ENCODE measurements at regions of chr2 and their contacts with region 1.

Region 1: GRCh38 chr2:159300585-159300984 is 14.1 kb upstream of the WDSUB1 start:
- DNase-seq: no peak
- ATAC-seq: no peak
- H3K4me3 ChIP-seq: no peak overlapping the region
- H3K4me3 Mint-ChIP-seq: no peak overlapping the region
- H3K27ac ChIP-seq: no peak overlapping the region
- H3K27ac Mint-ChIP-seq: no peak overlapping the region
- H3K4me1 ChIP-seq: no peaks in the 10 kb centered on the region
- H3K4me1 Mint-ChIP-seq: no peaks in the 10 kb centered on the region
- H3K27me3 ChIP-seq: no peaks in the 10 kb centered on the region
- H3K27me3 Mint-ChIP-seq: peaks cover 7% of the 10 kb centered on the region
- CTCF ChIP-seq: no peak

Region 2: DNA sequence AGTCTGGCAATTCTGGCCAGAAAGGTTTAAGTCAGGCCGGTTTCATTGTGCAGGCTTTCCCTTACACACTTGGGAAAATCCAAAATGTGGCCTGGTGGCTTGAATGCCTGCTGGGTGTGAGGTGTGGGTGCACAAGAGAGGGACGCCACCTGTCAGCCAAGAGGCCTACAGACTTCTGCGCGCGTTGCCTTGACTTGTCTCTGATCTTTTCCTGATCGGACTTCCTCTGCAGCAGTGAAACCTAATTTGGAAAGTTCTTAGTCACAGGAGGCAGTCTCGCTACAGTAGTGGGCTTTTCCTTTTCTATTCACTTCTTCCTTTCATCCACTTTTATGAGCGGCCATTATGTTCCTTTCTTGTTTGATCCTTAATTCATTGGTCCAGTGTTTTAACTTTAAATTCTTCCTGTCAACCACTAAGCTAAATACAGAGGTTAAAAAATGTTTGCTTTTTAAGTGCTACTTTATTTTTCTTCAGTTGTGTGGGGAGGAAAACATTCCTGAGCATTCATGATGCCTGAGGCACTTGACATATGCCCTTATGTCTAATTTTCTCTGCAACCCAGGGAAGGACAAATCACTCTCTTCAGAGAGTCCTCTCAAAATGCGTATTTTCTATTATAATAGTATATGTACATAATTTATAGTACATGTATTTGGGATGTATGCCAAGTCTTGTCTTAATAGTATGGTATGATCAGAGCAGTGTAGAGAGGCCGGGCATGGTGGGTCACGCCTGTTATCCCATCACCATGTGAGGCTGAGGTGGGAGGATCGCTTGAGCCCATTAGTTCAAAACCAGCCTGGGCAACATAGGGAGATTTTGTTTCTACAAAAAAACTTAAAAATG is 143.0 kb before region 1 on chr2:
- CTCF ChIA-PET with region 1: no interaction called
- POLR2A ChIA-PET with region 1: no interaction called
- intact Hi-C with region 1: no loop called
- DNase-seq: no peak
- ATAC-seq: no peak
- H3K4me3 ChIP-seq: no peak overlapping the region
- H3K4me3 Mint-ChIP-seq: no peak overlapping the region
- H3K27ac ChIP-seq: no peak overlapping the region
- H3K27ac Mint-ChIP-seq: no peak overlapping the region
- H3K4me1 ChIP-seq: peaks cover 12% of the 10 kb centered on the region
- H3K4me1 Mint-ChIP-seq: peaks cover 32% of the 10 kb centered on the region
- H3K27me3 ChIP-seq: no peaks in the 10 kb centered on the region
- H3K27me3 Mint-ChIP-seq: no peaks in the 10 kb centered on the region
- CTCF ChIP-seq: no peak

Region 3: DNA sequence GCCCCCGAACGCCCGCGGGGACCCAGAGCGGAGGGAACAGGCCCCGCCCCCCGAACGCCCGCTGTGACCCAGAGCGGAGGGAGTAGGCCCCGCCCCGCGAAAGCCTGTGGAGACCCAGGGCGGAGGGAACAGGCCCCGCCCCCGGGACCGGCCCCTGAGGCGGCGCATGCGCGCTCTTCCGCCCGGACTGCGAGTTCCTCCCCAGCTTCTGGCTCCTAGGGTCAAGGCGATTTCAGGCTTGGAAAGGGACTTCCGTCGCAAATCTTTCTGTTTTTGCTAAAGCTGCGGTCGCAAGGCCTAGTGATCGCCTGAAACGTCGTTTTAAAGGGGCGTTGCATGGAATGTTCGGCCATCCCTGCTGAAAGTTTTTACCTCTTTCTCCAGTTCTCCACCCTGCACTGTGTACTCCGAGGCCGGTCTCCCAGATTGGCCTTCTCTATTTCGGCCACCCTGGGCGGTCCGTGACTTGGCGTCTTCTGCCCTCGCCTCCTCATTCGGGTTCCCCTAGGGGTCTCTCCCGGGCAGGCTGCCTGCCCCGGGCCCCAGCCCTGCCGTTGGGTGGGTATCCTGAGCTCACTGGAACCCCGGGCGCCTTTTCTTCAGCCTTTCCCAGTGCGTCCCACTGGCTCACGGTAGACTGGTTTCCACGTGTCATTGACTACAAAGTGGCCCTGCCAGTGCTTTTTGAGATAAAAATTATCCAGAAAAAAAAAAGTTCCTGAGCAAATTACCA is 13.7 kb before region 1 on chr2:
- CTCF ChIA-PET with region 1: no interaction called
- POLR2A ChIA-PET with region 1: no interaction called
- intact Hi-C with region 1: no loop called
- DNase-seq: peak; percentile 93 to 99 (median 97)
- ATAC-seq: peak; percentile 99
- H3K4me3 ChIP-seq: peak overlapping the region; percentile 65 to 86
- H3K4me3 Mint-ChIP-seq: peak overlapping the region; percentile 90
- H3K27ac ChIP-seq: peak overlapping the region; percentile 58 to 69
- H3K27ac Mint-ChIP-seq: peak overlapping the region; percentile 86
- H3K4me1 ChIP-seq: peaks cover 18% of the 10 kb centered on the region
- H3K4me1 Mint-ChIP-seq: peaks cover 33% of the 10 kb centered on the region
- H3K27me3 ChIP-seq: no peaks in the 10 kb centered on the region
- H3K27me3 Mint-ChIP-seq: no peaks in the 10 kb centered on the region
- CTCF ChIP-seq: no peak

Region 4: DNA sequence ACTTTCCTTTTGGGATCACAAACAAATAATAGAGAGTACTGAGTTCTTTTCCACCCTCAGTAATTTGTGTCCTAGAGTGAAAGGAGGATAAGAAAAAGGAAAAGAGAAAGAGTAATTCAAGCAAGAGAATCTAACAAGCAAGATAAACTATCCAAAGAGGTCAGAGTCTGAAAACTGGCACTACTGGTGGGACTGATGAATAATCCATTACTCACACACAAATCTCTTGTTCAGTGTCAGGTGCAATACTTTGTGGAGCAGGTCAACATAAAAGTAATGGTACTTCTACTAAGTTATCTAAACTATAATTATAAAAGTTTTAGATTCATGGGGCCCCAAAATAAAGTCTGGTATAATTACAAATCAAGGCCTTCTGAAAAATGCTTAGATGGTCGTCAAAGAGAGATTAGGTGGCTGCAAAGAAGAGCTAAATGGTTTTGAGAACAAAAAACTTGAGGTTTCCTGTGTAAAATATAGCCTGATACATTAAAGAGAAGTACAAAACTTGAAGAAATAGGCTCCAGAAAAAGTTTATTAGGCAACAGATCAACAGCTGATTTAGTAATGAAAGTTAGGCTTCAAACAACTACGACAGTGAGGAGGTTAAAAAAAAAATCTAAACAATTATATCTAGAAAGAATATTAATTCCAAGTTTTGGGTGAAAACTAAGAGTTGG is 206.3 kb after region 1 on chr2:
- CTCF ChIA-PET with region 1: no interaction called
- POLR2A ChIA-PET with region 1: no interaction called
- intact Hi-C with region 1: loop called in 1 of 2 experiments (anchors 10 kb)
- DNase-seq: peak in 1 of 9 experiments; percentile 8
- ATAC-seq: no peak
- H3K4me3 ChIP-seq: no peak overlapping the region
- H3K4me3 Mint-ChIP-seq: peak overlapping the region; percentile 12
- H3K27ac ChIP-seq: peak overlapping the region in 1 of 2 experiments; percentile 34
- H3K27ac Mint-ChIP-seq: no peak overlapping the region
- H3K4me1 ChIP-seq: no peaks in the 10 kb centered on the region
- H3K4me1 Mint-ChIP-seq: peaks cover 28% of the 10 kb centered on the region
- H3K27me3 ChIP-seq: no peaks in the 10 kb centered on the region
- H3K27me3 Mint-ChIP-seq: no peaks in the 10 kb centered on the region
- CTCF ChIP-seq: no peak